ENCODE measurements at regions of chr6 and their contacts with region 1.

Region 1: DNA sequence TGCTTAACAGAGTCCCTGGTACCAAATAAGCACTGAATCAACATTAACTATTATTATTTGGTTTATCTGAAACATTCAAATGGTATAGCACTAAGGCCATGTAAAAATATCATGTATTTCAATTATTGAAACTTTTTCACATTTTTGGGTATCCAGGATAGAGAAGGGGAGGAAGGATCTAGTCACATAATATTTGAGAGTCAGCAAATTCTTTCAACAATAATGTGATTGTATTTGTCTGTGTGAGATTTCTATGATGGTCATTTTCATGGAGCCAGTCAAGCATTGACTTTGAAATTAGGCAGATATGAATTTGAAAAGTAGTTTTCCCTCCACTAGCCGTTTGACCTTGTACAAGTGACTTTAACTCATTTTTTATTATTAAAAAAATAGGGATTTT is 67.9 kb downstream of the LAMA2 start:
- DNase-seq: no peak
- H3K4me3 ChIP-seq: no peak overlapping the region
- H3K27ac ChIP-seq: no peak overlapping the region
- H3K27me3 ChIP-seq: no peaks in the 10 kb centered on the region
- CTCF ChIP-seq: no peak

Region 2: DNA sequence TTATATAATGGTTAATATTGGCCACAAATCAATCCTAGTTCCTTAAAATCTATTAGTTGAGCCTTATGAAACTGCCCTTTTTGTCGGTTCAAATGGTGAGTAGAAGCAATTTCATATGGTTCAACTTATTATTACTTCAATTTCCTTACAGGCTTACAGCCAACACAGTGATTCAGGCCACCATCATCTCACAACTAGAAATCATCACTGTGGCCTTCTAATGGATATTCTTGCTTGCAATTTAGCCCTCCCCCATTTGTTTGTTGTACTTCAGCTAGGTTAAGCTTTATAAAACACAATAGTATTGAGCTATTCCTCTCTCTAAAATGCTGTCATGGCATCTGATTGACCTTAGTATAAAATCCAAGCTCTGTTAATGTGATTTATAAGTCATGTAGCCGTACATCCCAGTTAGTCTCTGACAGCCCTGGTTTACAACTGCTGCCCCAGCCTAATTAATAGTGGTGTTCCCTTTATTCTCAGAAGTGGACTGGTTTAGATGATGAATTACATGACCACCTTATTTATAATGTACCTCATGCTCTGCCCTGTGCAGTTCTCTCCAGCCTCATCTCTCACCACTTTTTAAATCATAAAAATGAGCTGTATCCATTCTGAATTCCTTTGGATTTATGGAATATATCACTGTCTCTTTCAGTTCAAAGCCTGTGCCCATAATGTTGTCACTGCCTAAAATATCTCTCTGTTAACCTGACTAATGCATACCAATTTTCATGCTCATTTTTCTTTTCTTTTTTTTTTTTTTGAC is 31.3 kb before region 1 on chr6:
- intact Hi-C with region 1: no loop called
- DNase-seq: no peak
- H3K4me3 ChIP-seq: no peak overlapping the region
- H3K27ac ChIP-seq: no peak overlapping the region
- H3K27me3 ChIP-seq: no peaks in the 10 kb centered on the region
- CTCF ChIP-seq: no peak

Region 3: DNA sequence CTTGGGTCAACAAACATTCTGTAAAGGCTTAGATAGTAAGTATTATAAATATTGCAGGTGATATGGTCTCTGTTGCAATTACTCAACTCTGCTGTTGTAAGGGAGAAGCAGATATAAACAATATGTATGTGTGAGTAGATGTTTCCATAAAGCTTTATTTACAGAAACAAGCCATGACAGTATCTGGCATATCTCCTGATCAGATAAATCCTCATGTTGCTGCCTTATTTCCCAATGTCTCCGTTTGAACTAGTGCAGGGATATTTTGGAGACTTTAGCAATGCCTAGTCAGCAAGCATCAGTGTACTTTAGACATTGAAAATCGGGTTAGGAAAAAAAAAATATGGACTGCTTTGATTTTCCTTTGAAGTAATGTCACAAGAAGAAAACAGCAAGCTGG is 28.2 kb after region 1 on chr6:
- intact Hi-C with region 1: loop called in 1 of 2 experiments (anchors 2 kb)
- DNase-seq: no peak
- H3K4me3 ChIP-seq: no peak overlapping the region
- H3K27ac ChIP-seq: no peak overlapping the region
- H3K27me3 ChIP-seq: no peaks in the 10 kb centered on the region
- CTCF ChIP-seq: no peak